Colonic mucosa (tissue), 4 donors: ENCODE measurements at regions of chr2 and their contacts with region 1.

Region 1: GRCh38 chr2:231104115-231104713 is 20.6 kb downstream of the HTR2B start:
- DNase-seq: peak; percentile 80
- H3K4me3 ChIP-seq: no peak overlapping the region
- H3K27ac ChIP-seq: peak overlapping the region; percentile 36
- H3K4me1 ChIP-seq: no peaks in the 10 kb centered on the region
- H3K27me3 ChIP-seq: no peaks in the 10 kb centered on the region
- CTCF ChIP-seq: peak; percentile 82

Region 2: DNA sequence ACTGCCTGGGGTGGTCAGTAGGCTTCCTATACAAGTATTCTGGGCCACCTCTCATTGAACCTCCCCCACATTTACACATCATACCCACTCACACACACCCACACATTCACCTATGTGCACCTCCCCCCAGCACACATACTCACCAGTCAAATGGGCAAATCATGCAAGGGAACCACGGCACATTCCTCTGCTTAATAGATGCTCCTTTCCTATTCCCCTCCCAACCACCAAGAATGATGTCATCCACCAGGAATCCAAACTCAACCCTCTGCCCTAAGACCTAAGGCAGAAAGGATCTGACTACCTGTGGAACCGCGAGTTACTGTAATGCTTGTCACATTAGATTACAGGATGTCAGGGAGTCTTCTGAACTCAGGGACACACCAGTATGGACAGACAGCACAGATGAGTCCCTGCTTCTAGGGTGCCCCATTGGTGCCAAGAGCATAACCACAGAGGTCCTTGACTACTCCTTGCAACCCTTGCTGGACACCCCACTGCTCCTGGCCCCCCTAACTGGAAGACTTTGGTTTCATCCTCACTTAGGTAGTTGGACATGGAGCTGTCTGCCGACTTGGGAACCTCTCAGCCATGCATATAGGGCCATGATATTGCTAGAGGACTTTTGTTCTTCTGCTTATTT is 413.1 kb before region 1 on chr2:
- intact Hi-C with region 1: no loop called
- DNase-seq: no peak
- H3K4me3 ChIP-seq: no peak overlapping the region
- H3K27ac ChIP-seq: no peak overlapping the region
- H3K4me1 ChIP-seq: no peaks in the 10 kb centered on the region
- H3K27me3 ChIP-seq: no peaks in the 10 kb centered on the region
- CTCF ChIP-seq: no peak

Region 3: GRCh38 chr2:231198291-231199173 is 94.3 kb after region 1 on chr2 and contains the start of gene ARMC9:
- intact Hi-C with region 1: loop called (anchors 5 kb)
- DNase-seq: peak; percentile 80
- H3K4me3 ChIP-seq: peak within 1 kb of the TSS; percentile 72
- H3K27ac ChIP-seq: peak within 1 kb of the TSS; percentile 29
- H3K4me1 ChIP-seq: peaks cover 4% of the 10 kb centered on the region
- H3K27me3 ChIP-seq: no peaks in the 10 kb centered on the region
- CTCF ChIP-seq: no peak
- total RNA-seq, gene ARMC9: 9.8 to 17.2 TPM

Region 4: DNA sequence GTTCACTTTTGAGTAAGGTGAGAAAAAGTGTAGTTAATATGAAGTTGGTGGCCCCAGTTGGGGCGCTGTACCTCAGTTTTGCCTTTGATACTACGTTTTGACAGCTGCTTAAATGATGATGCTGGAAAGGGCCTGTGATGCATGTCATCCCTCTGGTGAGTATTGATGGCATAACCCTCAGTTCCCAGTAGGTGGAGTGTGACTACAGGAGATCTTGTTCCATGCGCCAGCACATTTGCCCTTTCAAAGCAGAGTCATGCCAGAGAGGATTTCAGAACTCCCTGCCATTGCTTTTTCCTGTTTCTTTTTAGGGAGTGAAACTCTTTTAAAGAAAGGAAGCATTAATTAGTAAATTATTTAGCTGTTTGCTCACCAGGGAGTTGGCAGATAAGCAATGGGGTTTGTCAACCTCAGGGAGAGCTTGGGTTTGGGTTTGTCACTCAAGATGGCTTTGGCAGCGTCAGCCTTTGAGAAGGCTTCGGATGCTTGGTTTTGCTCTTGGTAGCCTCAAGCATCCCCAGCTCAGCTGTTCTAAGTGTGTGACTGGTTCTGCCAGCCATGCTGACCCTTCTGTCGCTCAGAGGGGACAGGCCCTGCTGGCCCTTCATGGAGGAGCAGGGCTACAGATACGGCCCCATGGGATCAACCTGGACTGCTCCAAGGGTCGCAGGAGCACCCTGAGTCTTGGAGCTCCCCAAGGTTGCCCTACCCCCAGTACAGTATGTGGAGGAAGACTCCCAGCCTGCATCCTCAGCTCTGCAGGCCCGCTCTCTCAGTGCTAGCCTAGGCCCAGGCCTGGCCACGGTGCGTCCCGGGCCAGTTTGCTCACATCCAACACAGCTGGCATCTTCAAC is 123.3 kb after region 1 on chr2:
- intact Hi-C with region 1: loop called (anchors 10 kb)
- DNase-seq: peak; percentile 78
- H3K4me3 ChIP-seq: no peak overlapping the region
- H3K27ac ChIP-seq: no peak overlapping the region
- H3K4me1 ChIP-seq: peaks cover 12% of the 10 kb centered on the region
- H3K27me3 ChIP-seq: no peaks in the 10 kb centered on the region
- CTCF ChIP-seq: peak; percentile 78

Region 5: DNA sequence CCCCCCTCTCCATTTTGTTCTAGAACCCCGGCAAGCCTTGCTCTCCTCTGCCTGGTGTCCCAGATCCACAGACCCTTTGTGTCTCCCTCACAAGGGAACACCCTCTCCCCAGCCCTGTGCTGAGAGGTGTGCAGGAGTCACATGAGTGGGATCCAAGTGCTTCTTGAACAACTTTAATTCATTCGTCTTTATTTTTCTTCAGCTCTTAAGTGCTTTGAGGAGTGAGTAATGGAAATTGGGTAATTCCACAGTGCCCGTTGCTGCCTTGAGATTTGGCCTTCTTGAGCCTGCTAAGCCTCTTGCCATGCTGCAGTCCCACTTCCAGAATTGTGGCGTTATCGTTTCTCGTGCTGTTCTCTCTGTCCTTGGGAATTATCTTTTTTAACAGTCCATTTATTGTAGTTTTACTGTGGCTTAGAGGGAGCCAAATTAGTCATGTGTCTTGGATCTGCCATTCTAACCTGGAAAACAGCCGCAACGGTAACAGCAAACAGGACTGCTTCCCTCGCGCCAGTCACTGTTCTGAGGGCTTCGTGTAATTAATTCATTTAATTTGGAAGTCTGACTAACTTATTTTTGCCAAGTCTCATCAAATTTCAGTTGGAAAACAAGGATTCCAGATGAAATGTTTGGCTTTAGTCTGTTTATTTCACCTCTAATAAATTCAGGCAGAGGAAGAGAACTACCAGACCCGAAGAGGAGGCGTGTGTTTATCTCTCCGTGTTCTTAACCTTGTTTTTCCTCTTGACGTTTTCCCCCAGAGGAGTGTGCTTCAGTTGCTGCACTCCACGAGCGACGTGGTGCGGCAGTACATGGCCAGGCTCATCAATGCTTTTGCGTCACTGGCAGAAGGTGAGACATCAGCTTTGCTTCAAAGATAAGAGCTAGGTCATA is 166.3 kb after region 1 on chr2:
- intact Hi-C with region 1: no loop called
- DNase-seq: no peak
- H3K4me3 ChIP-seq: no peak overlapping the region
- H3K27ac ChIP-seq: no peak overlapping the region
- H3K4me1 ChIP-seq: no peaks in the 10 kb centered on the region
- H3K27me3 ChIP-seq: no peaks in the 10 kb centered on the region
- CTCF ChIP-seq: no peak

Region 6: GRCh38 chr2:231378026-231378722 is 274.0 kb after region 1 on chr2:
- intact Hi-C with region 1: no loop called
- DNase-seq: peak; percentile 78
- H3K4me3 ChIP-seq: no peak overlapping the region
- H3K27ac ChIP-seq: peak overlapping the region; percentile 62
- H3K4me1 ChIP-seq: peaks cover 6% of the 10 kb centered on the region
- H3K27me3 ChIP-seq: no peaks in the 10 kb centered on the region
- CTCF ChIP-seq: no peak

Region 7: DNA sequence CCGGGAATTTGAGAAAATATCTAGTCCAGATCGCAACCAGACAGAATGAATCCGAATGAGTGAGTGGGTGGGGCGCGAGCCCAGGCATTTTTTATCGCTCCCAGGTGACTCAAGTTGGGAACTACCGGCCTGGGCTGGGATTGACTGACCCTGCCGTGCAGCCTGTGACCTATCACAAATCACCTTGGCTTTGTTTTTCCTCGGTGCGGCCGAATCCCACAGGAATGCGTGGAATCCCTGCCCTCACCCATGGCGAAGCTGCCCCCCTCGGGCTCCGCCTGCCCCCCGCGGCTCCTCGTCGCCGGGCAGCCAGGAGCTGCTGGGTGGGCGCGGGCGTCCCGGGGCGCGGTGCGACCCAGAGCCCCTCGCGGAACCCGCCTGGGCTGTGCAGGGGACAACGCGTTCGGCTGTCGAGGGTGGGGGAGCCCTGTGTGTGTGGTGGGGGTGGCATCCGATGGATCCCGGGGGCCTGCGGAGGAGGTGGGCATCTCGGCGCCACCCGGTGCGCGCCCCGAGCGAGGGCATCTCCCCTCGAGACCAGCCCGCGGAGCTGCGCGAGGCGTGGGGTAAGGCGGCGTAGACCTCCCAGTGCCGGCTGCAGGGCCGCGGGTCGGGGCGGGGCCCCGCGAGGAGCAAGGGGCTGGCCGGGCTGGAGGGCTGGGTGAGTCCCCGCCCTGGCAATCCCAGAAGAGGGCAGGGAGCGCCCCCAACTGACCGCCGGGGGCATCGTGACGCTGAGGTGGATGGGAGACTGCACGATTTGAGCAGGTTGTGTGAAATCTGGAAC is 307.8 kb after region 1 on chr2:
- intact Hi-C with region 1: loop called (anchors 5 kb)
- DNase-seq: peak; percentile 97
- H3K4me3 ChIP-seq: peak overlapping the region; percentile 55
- H3K27ac ChIP-seq: peak overlapping the region; percentile 86
- H3K4me1 ChIP-seq: peaks cover 4% of the 10 kb centered on the region
- H3K27me3 ChIP-seq: no peaks in the 10 kb centered on the region
- CTCF ChIP-seq: peak; percentile 91

Region 8: DNA sequence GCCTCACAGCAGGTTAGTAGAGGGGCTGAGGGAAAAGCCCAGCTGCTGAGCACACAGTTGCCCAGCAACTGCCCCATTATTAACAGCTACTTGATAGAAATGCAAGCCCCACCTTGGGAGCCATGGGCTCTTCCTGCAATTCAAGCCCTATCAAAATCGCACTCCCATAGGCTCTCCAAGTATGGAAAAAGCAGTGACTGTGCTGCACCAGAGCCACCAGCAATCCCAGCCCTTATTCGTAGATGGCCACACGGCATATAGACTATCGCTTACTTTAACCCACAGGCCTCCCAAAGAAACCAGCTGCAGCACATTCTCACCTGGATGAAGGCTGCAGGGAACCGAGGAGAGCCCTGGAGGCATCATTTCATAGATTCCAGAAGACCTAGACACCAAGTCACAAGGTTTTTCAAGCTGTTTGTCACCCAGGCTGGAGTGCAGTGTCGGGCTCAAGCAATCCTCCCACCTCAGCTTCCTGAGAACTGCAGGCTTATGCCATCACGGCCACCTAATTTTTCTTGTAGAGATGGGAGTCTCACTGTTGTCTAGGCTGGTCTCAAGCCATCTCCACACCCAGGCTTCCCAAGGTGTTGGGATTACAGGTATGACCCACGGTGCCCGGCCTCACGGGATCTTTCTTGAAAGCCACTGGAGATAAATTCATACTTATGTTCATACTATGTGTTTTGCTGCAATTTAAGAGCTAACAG is 348.7 kb after region 1 on chr2:
- intact Hi-C with region 1: loop called (anchors 5 kb)
- DNase-seq: no peak
- H3K4me3 ChIP-seq: no peak overlapping the region
- H3K27ac ChIP-seq: no peak overlapping the region
- H3K4me1 ChIP-seq: no peaks in the 10 kb centered on the region
- H3K27me3 ChIP-seq: no peaks in the 10 kb centered on the region
- CTCF ChIP-seq: no peak

Region 9: DNA sequence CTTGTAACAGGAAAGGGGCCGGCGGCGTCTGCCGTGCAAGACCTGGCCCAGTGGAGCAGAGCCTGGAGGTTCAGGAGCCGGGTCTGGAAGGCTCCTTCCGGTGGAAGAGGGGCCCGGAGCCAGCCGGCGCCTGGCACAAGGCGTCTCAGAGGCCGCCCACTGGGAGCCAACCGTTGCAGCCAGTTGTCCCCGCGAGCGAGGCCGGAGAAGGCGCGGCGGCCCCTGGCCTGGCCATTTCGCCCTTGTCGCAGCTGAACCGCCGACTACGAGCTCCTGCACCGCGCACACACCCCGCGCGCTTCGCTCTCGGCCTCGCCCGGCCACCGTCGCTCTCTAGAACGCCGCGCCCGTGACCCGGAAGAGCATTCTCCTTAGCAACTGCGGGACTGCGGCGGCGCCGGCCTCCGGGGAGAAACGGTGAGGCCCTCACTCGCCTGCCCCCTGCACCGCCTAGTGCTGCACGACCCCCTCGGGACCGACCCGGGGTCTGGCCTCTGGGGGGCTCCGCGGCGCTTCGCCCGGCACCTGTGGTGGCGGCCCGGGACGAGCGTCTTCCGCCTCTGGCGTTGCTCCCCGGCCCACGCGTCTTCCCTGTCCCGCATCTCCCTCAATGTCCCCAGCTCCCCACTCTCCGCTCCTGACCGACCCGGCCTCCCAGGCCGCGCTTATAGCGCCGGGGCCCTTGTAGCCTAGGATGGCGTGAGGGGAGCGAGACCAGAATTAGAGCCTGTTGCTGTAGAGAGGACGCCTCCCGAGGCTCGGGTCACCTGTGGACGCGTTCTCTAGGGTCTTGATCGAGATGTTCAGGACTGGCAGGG is 857.3 kb after region 1 on chr2 and contains the start of gene DIS3L2:
- intact Hi-C with region 1: no loop called
- DNase-seq: peak; percentile 85
- H3K4me3 ChIP-seq: peak within 1 kb of the TSS; percentile 93
- H3K27ac ChIP-seq: peak within 1 kb of the TSS; percentile 70
- H3K4me1 ChIP-seq: no peaks in the 10 kb centered on the region
- H3K27me3 ChIP-seq: no peaks in the 10 kb centered on the region
- CTCF ChIP-seq: no peak
- total RNA-seq, gene DIS3L2: 22.6 to 32.3 TPM